Activated CD4-positive, alpha-beta T cell treated with anti-CD3 and anti-CD28 coated beads for 36 hours (primary cell): ENCODE measurements at regions of chr17 and their contacts with region 1.

Region 1: DNA sequence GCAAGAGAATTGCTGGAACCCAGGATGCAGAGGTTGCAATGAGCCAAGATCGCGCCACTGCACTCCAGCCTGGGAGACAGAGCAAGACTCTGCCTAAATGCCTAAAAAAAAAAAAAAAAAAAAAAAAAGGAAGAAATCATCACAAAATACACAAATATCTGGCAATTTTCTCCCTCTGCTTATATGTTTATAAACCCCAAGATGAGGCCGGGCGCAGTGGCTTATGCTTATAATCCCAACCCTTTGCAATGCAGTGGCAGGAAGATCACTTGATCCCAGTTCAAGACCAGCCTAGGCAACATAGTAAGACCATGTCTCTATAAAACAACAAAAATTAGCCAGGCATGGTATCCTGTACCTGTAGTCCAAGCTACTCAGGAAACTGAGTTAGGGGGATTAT is 21.5 kb downstream of the MED1 start:
- DNase-seq: no peak
- ATAC-seq: no peak
- H3K4me3 Mint-ChIP-seq: no peak overlapping the region
- H3K27ac Mint-ChIP-seq: no peak overlapping the region
- H3K4me1 Mint-ChIP-seq: no peaks in the 10 kb centered on the region
- H3K27me3 Mint-ChIP-seq: no peaks in the 10 kb centered on the region

Region 2: GRCh38 chr17:39352511-39352910 is 77.1 kb before region 1 on chr17:
- CTCF ChIA-PET with region 1: no interaction called
- POLR2A ChIA-PET with region 1: no interaction called
- intact Hi-C with region 1: no loop called
- DNase-seq: no peak
- ATAC-seq: no peak
- H3K4me3 Mint-ChIP-seq: no peak overlapping the region
- H3K27ac Mint-ChIP-seq: no peak overlapping the region
- H3K4me1 Mint-ChIP-seq: no peaks in the 10 kb centered on the region
- H3K27me3 Mint-ChIP-seq: no peaks in the 10 kb centered on the region

Region 3: GRCh38 chr17:39399792-39400191 is 29.8 kb before region 1 on chr17:
- CTCF ChIA-PET with region 1: no interaction called
- POLR2A ChIA-PET with region 1: no interaction called
- intact Hi-C with region 1: no loop called
- DNase-seq: no peak
- ATAC-seq: no peak
- H3K4me3 Mint-ChIP-seq: peak overlapping the region; percentile 91
- H3K27ac Mint-ChIP-seq: no peak overlapping the region
- H3K4me1 Mint-ChIP-seq: peaks cover 35% of the 10 kb centered on the region
- H3K27me3 Mint-ChIP-seq: no peaks in the 10 kb centered on the region

Region 4: GRCh38 chr17:39410279-39410678 is 19.3 kb before region 1 on chr17:
- CTCF ChIA-PET with region 1: interaction called, 3 read pairs
- POLR2A ChIA-PET with region 1: interaction called, 15 read pairs
- intact Hi-C with region 1: no loop called
- DNase-seq: no peak
- ATAC-seq: no peak
- H3K4me3 Mint-ChIP-seq: no peak overlapping the region
- H3K27ac Mint-ChIP-seq: no peak overlapping the region
- H3K4me1 Mint-ChIP-seq: peaks cover 19% of the 10 kb centered on the region
- H3K27me3 Mint-ChIP-seq: no peaks in the 10 kb centered on the region

Region 5: DNA sequence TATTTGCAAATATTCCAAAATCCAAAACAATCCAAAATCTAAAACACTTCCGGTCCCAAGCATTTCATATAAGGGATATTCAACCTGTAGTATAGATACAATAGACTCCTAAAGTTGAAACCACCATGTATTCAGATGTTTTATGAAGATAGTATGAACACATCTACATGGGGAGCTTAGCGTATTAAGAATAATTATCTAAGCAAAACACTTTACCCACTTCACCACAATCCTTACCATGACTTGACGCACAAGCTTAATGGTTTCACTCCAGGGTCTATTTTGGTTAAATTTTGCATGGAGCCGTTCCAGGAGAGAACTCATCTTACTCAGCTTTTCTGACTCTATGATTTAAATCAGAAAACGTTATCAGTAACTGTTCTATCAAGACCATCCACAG is 18.0 kb after region 1 on chr17:
- CTCF ChIA-PET with region 1: no interaction called
- POLR2A ChIA-PET with region 1: no interaction called
- intact Hi-C with region 1: no loop called
- DNase-seq: no peak
- ATAC-seq: no peak
- H3K4me3 Mint-ChIP-seq: no peak overlapping the region
- H3K27ac Mint-ChIP-seq: no peak overlapping the region
- H3K4me1 Mint-ChIP-seq: peaks cover 22% of the 10 kb centered on the region
- H3K27me3 Mint-ChIP-seq: no peaks in the 10 kb centered on the region